GM12878 (cell line): ENCODE measurements at regions of chr11 and their contacts with region 1.

Region 1: DNA sequence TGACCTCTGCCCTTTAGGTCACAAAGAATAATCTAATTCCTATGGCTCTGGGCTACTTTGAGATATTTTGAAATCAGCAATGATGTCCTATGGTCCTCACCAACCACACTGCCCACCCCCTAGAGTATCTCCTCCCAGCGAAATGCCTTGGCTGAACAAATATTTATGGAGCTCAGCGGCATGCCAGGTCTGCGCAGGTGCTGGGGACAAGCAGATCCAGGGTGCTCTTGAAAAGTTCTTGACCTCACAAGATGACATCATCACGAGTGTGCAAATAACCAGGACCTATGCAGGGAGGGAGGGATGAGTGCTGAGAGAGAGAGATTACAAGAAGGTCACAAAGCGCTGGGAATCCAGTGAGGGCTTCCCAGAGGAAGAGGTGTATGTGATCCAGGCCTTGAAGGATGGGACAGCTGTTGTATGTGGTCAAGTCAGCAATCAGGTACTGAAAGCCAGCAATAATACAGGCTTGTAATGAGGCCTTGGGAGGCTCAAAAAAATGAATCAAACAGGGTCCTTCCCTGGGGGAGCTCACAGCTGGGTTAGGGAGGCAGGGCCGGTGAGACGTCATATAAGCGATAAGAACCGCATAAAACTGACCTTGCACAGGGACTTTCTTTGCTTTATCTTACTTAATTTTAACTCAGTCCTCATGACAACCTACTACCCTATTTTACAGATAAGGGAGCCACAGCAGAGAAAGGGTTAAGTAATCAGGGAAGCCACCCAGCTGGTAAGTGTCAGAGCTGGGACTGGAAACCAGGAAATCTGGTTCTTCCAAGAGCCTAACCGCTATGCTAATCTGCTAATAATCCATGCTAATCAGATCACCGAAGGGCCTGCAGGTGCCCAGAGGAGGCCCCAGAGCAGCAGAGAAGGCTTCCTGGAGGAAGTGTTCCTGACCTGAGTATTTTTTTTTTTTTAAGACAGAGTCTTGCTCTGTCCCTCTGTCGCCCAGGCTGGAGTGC is 8.3 kb downstream of the ARRB1 start:
- DNase-seq: no peak
- ATAC-seq: no peak
- H3K4me3 ChIP-seq: no peak overlapping the region
- H3K27ac ChIP-seq: no peak overlapping the region
- H3K4me1 ChIP-seq: peaks cover 62% of the 10 kb centered on the region
- H3K27me3 ChIP-seq: no peaks in the 10 kb centered on the region
- CTCF ChIP-seq: no peak
- EP300 ChIP-seq: no peak
- POLR2A ChIP-seq: no peak
- RAD21 ChIP-seq: no peak

Region 2: GRCh38 chr11:75100314-75100713 is 242.9 kb before region 1 on chr11:
- CTCF ChIA-PET with region 1: no interaction called
- POLR2A ChIA-PET with region 1: no interaction called
- RAD21 ChIA-PET with region 1: no interaction called
- SMC1A ChIA-PET with region 1: no interaction called
- in situ Hi-C with region 1: no loop called
- intact Hi-C with region 1: no loop called
- DNase-seq: peak; percentile 78
- ATAC-seq: peak; percentile 97
- H3K4me3 ChIP-seq: peak overlapping the region; percentile 1; the same call in 1 of the 2 replicates
- H3K27ac ChIP-seq: peak overlapping the region; percentile 57
- H3K4me1 ChIP-seq: peaks cover 8% of the 10 kb centered on the region; the same call in 1 of the 2 replicates
- H3K27me3 ChIP-seq: no peaks in the 10 kb centered on the region
- CTCF ChIP-seq: no peak
- EP300 ChIP-seq: no peak; a peak in 1 of 4 replicates
- POLR2A ChIP-seq: no peak
- RAD21 ChIP-seq: no peak

Region 3: DNA sequence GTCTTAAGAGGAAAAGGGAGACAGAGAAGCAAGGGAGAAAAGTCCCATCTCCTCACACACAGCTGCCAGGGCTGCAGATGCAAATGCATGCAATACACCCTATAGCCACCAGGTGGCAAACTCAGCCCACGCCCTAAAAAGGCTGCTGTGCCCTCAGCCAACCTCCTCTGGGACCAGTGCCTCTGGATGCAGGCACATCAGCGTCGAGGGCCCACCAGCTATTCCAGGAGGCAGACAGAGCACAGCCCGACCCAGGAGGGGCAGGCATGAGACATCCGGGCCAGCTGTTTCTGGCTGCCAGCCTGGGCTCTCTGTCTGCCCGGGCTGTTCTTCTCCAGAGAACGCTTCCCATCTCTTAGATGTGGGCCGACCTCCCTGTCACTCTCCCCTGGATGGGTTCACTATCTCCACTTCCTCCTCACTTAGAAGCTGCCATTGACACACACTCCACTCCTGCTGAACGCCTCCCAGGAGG is 62.9 kb before region 1 on chr11:
- CTCF ChIA-PET with region 1: interaction called, 36 read pairs
- POLR2A ChIA-PET with region 1: no interaction called
- RAD21 ChIA-PET with region 1: interaction called, 9 read pairs
- SMC1A ChIA-PET with region 1: interaction called, 8 read pairs
- in situ Hi-C with region 1: no loop called
- intact Hi-C with region 1: no loop called
- DNase-seq: peak; percentile 16
- ATAC-seq: peak; percentile 98
- H3K4me3 ChIP-seq: no peak overlapping the region
- H3K27ac ChIP-seq: no peak overlapping the region
- H3K4me1 ChIP-seq: no peaks in the 10 kb centered on the region
- H3K27me3 ChIP-seq: no peaks in the 10 kb centered on the region; a peak in 1 of 4 replicates
- CTCF ChIP-seq: peak; percentile 93 to 96 (median 93)
- EP300 ChIP-seq: no peak
- POLR2A ChIP-seq: no peak
- RAD21 ChIP-seq: peak; percentile 90

Region 4: GRCh38 chr11:75328426-75329277 is 14.5 kb before region 1 on chr11:
- CTCF ChIA-PET with region 1: interaction called, 21 read pairs
- POLR2A ChIA-PET with region 1: interaction called, 7 read pairs
- RAD21 ChIA-PET with region 1: interaction called, 11 read pairs
- SMC1A ChIA-PET with region 1: interaction called, 18 read pairs
- in situ Hi-C with region 1: no loop called
- intact Hi-C with region 1: no loop called
- DNase-seq: peak; percentile 69
- ATAC-seq: peak; percentile 84
- H3K4me3 ChIP-seq: no peak overlapping the region
- H3K27ac ChIP-seq: peak overlapping the region; percentile 24; the same call in 1 of the 2 replicates
- H3K4me1 ChIP-seq: peaks cover 14% of the 10 kb centered on the region
- H3K27me3 ChIP-seq: no peaks in the 10 kb centered on the region
- CTCF ChIP-seq: peak; percentile 55 to 80 (median 65)
- EP300 ChIP-seq: no peak
- POLR2A ChIP-seq: no peak
- RAD21 ChIP-seq: peak; percentile 81

Region 5: GRCh38 chr11:75380711-75381420 is 37.7 kb after region 1 on chr11:
- CTCF ChIA-PET with region 1: interaction called, 64 read pairs
- POLR2A ChIA-PET with region 1: no interaction called
- RAD21 ChIA-PET with region 1: interaction called, 14 read pairs
- SMC1A ChIA-PET with region 1: interaction called, 16 read pairs
- in situ Hi-C with region 1: no loop called
- intact Hi-C with region 1: no loop called
- DNase-seq: no peak
- ATAC-seq: no peak
- H3K4me3 ChIP-seq: no peak overlapping the region
- H3K27ac ChIP-seq: no peak overlapping the region
- H3K4me1 ChIP-seq: no peaks in the 10 kb centered on the region; the same call in 1 of the 2 replicates
- H3K27me3 ChIP-seq: no peaks in the 10 kb centered on the region
- CTCF ChIP-seq: no peak
- EP300 ChIP-seq: no peak
- POLR2A ChIP-seq: no peak
- RAD21 ChIP-seq: no peak